CD4-positive, alpha-beta memory T cell (primary cell): ENCODE measurements at regions of chr11 and their contacts with region 1.

Region 1: GRCh38 chr11:326842-327580 is 6.4 kb upstream of the IFITM3 start:
- DNase-seq: peak; percentile 67 to 82 (median 68)
- H3K4me3 ChIP-seq: peak overlapping the region in 1 of 2 donors; percentile 37
- H3K4me3 Mint-ChIP-seq: peak overlapping the region; percentile 58 to 84 (median 67)
- H3K27ac ChIP-seq: peak overlapping the region; percentile 76
- H3K27ac Mint-ChIP-seq: peak overlapping the region; percentile 86 to 96 (median 91)
- H3K4me1 ChIP-seq: peaks cover 50% of the 10 kb centered on the region
- H3K4me1 Mint-ChIP-seq: peaks cover 33 to 80% (median 57%) of the 10 kb centered on the region in 4 donors
- H3K27me3 ChIP-seq: no peaks in the 10 kb centered on the region
- H3K27me3 Mint-ChIP-seq: no peaks in the 10 kb centered on the region

Region 2: DNA sequence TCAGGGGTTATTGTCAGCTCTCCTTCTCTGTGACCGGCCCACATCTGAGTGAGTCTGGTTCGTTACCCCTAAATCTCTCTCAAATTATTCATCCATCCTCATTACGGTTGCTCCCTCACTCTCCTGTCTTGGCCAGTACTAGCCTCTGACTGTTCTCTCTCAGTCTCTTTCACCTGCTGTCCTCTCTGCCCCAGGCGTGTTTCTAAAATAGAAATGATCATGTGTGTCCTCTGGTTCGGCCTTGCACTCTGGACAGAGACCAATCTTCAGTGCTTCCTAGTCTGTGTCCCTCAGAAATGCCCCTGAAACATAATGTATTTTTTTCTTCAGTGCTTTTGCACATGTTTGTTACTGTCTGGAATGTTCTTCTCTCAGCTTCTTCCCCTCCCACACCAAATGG is 85.4 kb before region 1 on chr11:
- CTCF ChIA-PET with region 1: no interaction called
- POLR2A ChIA-PET with region 1: no interaction called
- intact Hi-C with region 1: no loop called
- DNase-seq: no peak
- H3K4me3 ChIP-seq: no peak overlapping the region
- H3K4me3 Mint-ChIP-seq: peak overlapping the region in 1 of 8 donors; percentile 0
- H3K27ac ChIP-seq: no peak overlapping the region
- H3K27ac Mint-ChIP-seq: peak overlapping the region in 6 of 7 donors; percentile 31 to 77 (median 55)
- H3K4me1 ChIP-seq: peaks cover 14% of the 10 kb centered on the region
- H3K4me1 Mint-ChIP-seq: peaks cover 28 to 55% (median 41%) of the 10 kb centered on the region in 4 donors
- H3K27me3 ChIP-seq: no peaks in the 10 kb centered on the region
- H3K27me3 Mint-ChIP-seq: no peaks in the 10 kb centered on the region

Region 3: GRCh38 chr11:339963-340362 is 13.0 kb after region 1 on chr11:
- CTCF ChIA-PET with region 1: interaction called, 10 read pairs
- POLR2A ChIA-PET with region 1: no interaction called
- intact Hi-C with region 1: no loop called
- DNase-seq: no peak
- H3K4me3 ChIP-seq: no peak overlapping the region
- H3K4me3 Mint-ChIP-seq: no peak overlapping the region
- H3K27ac ChIP-seq: no peak overlapping the region
- H3K27ac Mint-ChIP-seq: no peak overlapping the region
- H3K4me1 ChIP-seq: peaks cover 5% of the 10 kb centered on the region
- H3K4me1 Mint-ChIP-seq: peaks cover 9 to 27% (median 15%) of the 10 kb centered on the region in 4 donors
- H3K27me3 ChIP-seq: no peaks in the 10 kb centered on the region
- H3K27me3 Mint-ChIP-seq: peaks cover 0 to 1% of the 10 kb centered on the region in 2 donors

Region 4: DNA sequence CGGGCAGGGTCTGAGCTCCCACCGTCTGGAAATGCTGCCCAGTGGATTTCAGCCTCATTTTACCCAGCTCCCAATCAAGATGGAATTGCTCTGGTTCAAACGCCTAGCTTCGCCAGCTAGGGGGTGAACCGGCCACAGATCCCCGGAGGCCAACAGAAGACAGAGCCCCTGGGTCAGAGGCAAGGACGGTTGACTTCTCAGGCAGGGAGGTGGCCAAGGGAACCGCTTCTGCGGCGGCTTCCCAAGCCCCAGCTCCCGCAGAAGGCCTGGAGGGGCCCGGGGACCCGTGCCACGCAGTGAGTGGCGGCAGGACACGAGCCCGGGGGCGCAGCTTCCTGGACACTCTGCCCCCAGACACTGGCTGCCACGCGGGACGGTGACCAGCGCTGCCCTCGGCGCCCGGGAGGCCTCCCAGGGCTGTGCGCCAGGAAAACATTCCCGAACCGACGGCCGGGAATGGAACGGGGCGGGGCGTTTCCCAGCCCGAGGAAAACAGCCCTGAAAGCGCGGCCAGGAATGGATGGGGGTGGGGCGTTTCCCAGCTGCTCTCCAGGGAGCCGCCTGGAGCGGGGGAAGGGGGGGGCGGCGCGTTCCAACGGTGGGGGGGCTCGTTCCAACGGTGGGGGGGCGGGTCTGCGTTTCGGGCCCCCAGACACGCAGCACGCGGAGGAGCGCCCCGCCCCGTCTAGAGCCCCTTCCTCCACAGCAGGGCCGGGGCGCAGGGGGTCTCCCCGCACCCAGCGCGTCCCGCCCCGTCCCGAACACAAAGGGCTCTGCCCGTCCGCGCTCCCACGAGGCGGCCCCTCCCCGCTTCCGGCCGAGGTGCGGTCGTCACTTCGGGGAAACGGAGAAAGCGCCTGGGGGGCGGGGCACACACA is 28.8 kb after region 1 on chr11:
- CTCF ChIA-PET with region 1: interaction called, 18 read pairs
- POLR2A ChIA-PET with region 1: interaction called, 16 read pairs
- intact Hi-C with region 1: no loop called
- DNase-seq: peak; percentile 85 to 90 (median 86)
- H3K4me3 ChIP-seq: peak overlapping the region in 1 of 2 donors; percentile 59
- H3K4me3 Mint-ChIP-seq: peak overlapping the region; percentile 77 to 91 (median 84)
- H3K27ac ChIP-seq: peak overlapping the region; percentile 89
- H3K27ac Mint-ChIP-seq: peak overlapping the region in 6 of 7 donors; percentile 96 to 99 (median 97)
- H3K4me1 ChIP-seq: peaks cover 20% of the 10 kb centered on the region
- H3K4me1 Mint-ChIP-seq: peaks cover 7 to 50% (median 29%) of the 10 kb centered on the region in 4 donors
- H3K27me3 ChIP-seq: no peaks in the 10 kb centered on the region
- H3K27me3 Mint-ChIP-seq: no peaks in the 10 kb centered on the region

Region 5: GRCh38 chr11:876519-876918 is 549.5 kb after region 1 on chr11:
- CTCF ChIA-PET with region 1: no interaction called
- POLR2A ChIA-PET with region 1: no interaction called
- intact Hi-C with region 1: no loop called
- DNase-seq: no peak
- H3K4me3 ChIP-seq: no peak overlapping the region
- H3K4me3 Mint-ChIP-seq: no peak overlapping the region
- H3K27ac ChIP-seq: no peak overlapping the region
- H3K27ac Mint-ChIP-seq: no peak overlapping the region
- H3K4me1 ChIP-seq: no peaks in the 10 kb centered on the region
- H3K4me1 Mint-ChIP-seq: peaks cover 0 to 2% (median 0%) of the 10 kb centered on the region in 4 donors
- H3K27me3 ChIP-seq: no peaks in the 10 kb centered on the region
- H3K27me3 Mint-ChIP-seq: no peaks in the 10 kb centered on the region